ENCODE measurements at regions of chr10 and their contacts with region 1.

Region 1: DNA sequence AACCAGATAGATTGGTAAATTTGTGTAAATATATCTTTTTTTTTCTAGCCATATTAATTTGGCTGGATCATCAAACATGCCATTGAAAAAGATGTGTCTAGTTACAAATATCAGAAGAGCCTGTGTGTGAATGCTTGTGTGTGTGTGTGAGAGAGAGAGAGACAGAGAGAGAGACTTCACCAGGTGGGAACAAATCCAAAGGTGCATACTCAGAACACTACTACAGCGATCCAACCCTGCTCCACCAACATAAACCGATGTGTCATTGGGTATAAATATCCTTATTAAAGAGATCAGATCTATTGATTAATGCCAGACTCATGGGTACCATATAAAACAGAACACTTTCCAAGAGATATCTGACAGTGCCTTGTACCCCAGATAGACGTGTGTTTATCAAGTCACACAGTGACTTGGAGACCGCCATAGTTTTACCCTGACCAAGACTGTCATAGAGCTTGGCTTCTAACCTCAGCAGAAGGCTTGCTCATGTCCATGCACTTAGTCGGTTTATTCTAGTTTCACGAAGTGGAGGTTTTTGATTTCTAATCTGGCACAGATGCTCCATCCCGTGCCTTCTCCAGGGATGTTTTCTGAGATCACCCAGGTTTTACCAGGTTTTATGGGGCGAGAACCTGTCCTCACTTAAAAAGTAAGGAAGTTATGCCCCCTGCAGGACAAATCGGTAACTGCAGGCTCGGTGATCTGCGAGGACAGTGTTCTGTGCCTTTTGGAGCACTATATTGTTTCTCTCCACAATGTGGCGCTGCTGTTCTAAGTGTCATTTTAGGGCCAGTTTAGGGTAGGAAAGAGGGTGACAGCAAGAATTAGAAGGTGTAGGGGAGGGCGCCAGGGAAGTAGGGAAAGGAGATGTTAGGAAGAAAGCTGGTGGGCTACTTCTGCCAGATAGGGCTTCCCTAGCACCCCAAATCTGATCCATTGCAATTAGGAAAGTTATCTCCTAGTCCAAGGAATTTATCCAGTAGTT is 29.3 kb upstream of the WNT8B start:
- DNase-seq: peak; percentile 88 to 91
- ATAC-seq: peak; percentile 92 to 97 (median 95)
- H3K4me3 ChIP-seq: no peak overlapping the region
- H3K27ac ChIP-seq: no peak overlapping the region
- H3K4me1 ChIP-seq: peaks cover under 1% of the 10 kb centered on the region
- H3K27me3 ChIP-seq: peaks cover 0 to 4% (median 0%) of the 10 kb centered on the region in 3 donors
- CTCF ChIP-seq: peak; percentile 100

Region 2: DNA sequence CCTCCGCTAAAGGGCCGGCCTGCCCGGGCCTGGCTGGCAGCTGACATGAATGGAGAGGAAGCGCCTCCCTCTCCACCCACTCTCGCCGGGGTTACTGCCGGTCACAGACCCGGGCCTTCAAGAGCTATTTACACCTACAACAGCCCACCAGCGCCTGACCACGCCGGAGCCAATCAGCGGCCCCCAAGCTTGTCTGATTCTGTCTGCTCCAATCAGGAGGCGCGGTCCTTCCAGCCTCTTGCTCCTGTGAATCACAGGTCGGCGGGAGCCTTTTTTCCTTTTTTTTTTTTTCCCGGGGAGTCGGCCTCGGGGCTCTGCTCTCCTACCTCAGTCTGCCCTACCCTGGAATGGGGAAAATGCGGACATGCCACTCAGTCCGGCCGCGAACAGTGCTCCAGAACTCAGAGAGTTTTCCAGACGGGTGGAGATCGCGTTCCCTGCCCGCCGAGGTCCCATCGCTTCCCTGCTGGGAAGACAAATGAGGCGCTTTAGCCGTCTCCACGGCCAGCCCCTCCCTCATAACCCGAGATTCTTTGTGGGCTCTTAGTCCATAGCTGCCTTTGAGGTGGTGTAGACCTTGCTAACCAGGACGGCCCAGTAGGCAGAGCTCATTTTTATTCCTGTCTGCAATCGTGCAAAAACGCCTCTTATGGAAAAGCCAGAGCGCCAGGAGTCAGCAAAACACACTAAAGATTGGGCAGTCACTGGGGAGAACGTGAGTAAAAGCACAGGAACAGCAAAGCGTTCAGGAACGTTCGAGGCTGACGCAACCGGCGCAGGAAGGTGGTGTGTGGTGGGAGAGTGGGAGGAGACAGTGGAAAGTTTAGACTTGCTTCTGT is 60.0 kb before region 1 on chr10:
- intact Hi-C with region 1: loop called in 1 of 2 experiments (anchors 5 kb)
- DNase-seq: peak; percentile 97 to 98
- ATAC-seq: peak; percentile 88 to 95 (median 91)
- H3K4me3 ChIP-seq: peak overlapping the region; percentile 69
- H3K27ac ChIP-seq: peak overlapping the region; percentile 94
- H3K4me1 ChIP-seq: peaks cover 44% of the 10 kb centered on the region
- H3K27me3 ChIP-seq: no peaks in the 10 kb centered on the region
- CTCF ChIP-seq: no peak

Region 3: GRCh38 chr10:100481462-100482081 is 48.0 kb after region 1 on chr10:
- intact Hi-C with region 1: no loop called
- DNase-seq: peak; percentile 79 to 86
- ATAC-seq: peak; percentile 94 to 98 (median 96)
- H3K4me3 ChIP-seq: peak overlapping the region; percentile 67
- H3K27ac ChIP-seq: no peak overlapping the region
- H3K4me1 ChIP-seq: peaks cover 12% of the 10 kb centered on the region
- H3K27me3 ChIP-seq: peaks cover 0 to 25% (median 0%) of the 10 kb centered on the region in 3 donors
- CTCF ChIP-seq: no peak

Measured in psoas muscle (tissue), 8 donors.